ENCODE measurements at regions of chr11 and their contacts with region 1.

Region 1: GRCh38 chr11:2178906-2179494 is 7.4 kb upstream of the TH start:
- DNase-seq: peak; percentile 82
- H3K4me3 ChIP-seq: no peak overlapping the region
- H3K27ac ChIP-seq: no peak overlapping the region
- H3K4me1 ChIP-seq: peaks cover 40% of the 10 kb centered on the region
- H3K27me3 ChIP-seq: no peaks in the 10 kb centered on the region
- CTCF ChIP-seq: no peak

Region 2: DNA sequence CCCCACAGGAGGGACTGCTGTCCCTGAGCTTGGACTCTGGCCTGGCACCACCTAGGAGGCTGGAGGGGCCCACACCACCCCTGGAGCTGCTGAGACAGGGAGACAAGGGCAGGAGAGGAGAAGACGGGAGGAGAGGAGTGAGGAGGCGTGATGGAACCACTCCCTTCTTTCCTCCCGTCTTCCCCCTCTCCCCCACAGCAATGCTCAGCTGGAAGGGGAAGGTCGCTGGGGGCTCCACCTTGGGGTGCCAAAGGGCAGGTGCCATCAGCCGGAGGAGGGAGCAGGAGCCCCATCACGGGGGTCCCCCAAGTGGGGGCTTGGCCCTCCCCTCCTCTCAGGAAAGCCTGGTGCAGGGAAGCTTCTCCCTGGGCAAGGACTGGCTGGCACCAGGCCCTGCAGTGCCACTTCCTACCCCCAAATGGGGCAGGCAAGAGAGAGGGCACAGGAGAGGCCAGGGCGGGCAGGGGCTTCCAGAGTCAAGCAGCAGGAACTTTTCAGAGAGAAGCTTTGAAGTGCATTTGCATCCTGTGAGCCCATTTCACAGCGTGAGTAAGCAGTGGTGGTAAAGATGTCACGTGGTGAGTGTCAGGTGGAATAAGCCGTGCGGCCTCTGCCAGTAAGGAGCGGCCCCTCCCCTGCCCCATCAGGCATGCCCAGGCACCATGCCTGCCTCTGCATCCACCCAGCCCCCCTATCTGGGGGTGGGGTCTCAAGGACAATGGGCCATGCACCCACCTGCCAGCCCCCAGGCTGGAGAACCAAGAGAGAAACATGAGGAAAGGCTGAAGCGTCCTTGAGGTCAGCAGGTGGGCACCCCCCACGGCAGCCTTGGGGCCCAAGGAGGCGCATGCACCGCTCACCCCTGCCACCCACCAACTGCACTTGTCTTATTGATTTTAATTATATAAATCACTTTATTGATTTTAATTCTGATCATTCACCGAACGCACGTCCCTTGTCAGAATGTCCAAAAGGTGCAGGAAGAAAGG is 44.7 kb before region 1 on chr11:
- CTCF ChIA-PET with region 1: no interaction called
- dilution Hi-C with region 1: loop called (anchors 5 kb)
- in situ Hi-C with region 1: no loop called
- intact Hi-C with region 1: no loop called
- DNase-seq: no peak
- H3K4me3 ChIP-seq: no peak overlapping the region
- H3K27ac ChIP-seq: no peak overlapping the region
- H3K4me1 ChIP-seq: no peaks in the 10 kb centered on the region
- H3K27me3 ChIP-seq: peaks cover 24% of the 10 kb centered on the region
- CTCF ChIP-seq: no peak

Region 3: DNA sequence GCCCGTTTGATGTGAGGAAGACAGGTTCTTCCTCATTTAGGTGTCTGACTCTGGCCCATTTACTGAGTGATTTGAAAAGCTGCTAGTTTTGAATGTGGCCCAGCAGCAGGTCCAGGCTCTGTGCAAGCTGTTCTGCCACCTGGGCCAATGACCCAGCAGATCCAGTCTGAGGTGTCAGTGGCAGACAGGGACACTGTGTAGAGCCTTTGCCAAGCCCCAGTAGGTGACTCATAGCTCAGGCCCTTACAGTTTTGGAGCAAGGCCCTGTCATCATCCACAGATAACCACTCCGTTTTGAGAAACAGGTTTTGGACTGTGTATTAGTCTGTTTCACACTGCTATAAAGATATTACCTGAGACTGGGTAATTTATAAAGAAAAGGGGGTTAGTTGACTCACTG is 146.7 kb after region 1 on chr11:
- CTCF ChIA-PET with region 1: no interaction called
- dilution Hi-C with region 1: loop called (anchors 5 kb)
- in situ Hi-C with region 1: no loop called
- intact Hi-C with region 1: no loop called
- DNase-seq: peak; percentile 61
- H3K4me3 ChIP-seq: no peak overlapping the region
- H3K27ac ChIP-seq: no peak overlapping the region
- H3K4me1 ChIP-seq: peaks cover 5% of the 10 kb centered on the region
- H3K27me3 ChIP-seq: no peaks in the 10 kb centered on the region
- CTCF ChIP-seq: no peak